Heart left ventricle (tissue), 16 donors: ENCODE measurements at regions of chr5 and their contacts with region 1.

Region 1: GRCh38 chr5:139670369-139671095 is 22.4 kb downstream of the CXXC5 start:
- DNase-seq: peak in 1 of 5 donors; percentile 29
- ATAC-seq: peak in 3 of 4 donors; percentile 9 to 33 (median 27)
- H3K4me3 ChIP-seq: peak overlapping the region in 9 of 12 donors; percentile 49 to 67 (median 61)
- H3K27ac ChIP-seq: peak overlapping the region; percentile 93 to 98 (median 95)
- H3K4me1 ChIP-seq: peaks cover 18 to 100% (median 91%) of the 10 kb centered on the region in 12 donors
- H3K27me3 ChIP-seq: no peaks in the 10 kb centered on the region
- CTCF ChIP-seq: peak in 6 of 12 donors; percentile 22 to 47 (median 28)
- POLR2A ChIP-seq: no peak

Region 2: GRCh38 chr5:139690064-139690802 is 19.7 kb after region 1 on chr5:
- intact Hi-C with region 1: loop called in 1 of 10 experiments (anchors 2 kb)
- DNase-seq: peak in 2 of 5 donors; percentile 49 to 56
- ATAC-seq: peak in 3 of 4 donors; percentile 1 to 40 (median 18)
- H3K4me3 ChIP-seq: no peak overlapping the region
- H3K27ac ChIP-seq: peak overlapping the region in 8 of 12 donors; percentile 16 to 64 (median 31)
- H3K4me1 ChIP-seq: peaks cover 0 to 76% (median 42%) of the 10 kb centered on the region in 12 donors
- H3K27me3 ChIP-seq: no peaks in the 10 kb centered on the region
- CTCF ChIP-seq: peak; percentile 13 to 74 (median 62)
- POLR2A ChIP-seq: no peak